Right lobe of liver (tissue), 6 donors: ENCODE measurements at regions of chr22 and their contacts with region 1.

Region 1: GRCh38 chr22:28019881-28020871 is 101.1 kb upstream of the PITPNB start:
- DNase-seq: peak; percentile 68 to 75 (median 71)
- ATAC-seq: peak; percentile 78 to 89 (median 85)
- H3K4me3 ChIP-seq: no peak overlapping the region
- H3K27ac ChIP-seq: no peak overlapping the region
- H3K4me1 ChIP-seq: no peaks in the 10 kb centered on the region
- H3K27me3 ChIP-seq: no peaks in the 10 kb centered on the region
- CTCF ChIP-seq: peak; percentile 89 to 94 (median 91)
- POLR2A ChIP-seq: no peak

Region 2: DNA sequence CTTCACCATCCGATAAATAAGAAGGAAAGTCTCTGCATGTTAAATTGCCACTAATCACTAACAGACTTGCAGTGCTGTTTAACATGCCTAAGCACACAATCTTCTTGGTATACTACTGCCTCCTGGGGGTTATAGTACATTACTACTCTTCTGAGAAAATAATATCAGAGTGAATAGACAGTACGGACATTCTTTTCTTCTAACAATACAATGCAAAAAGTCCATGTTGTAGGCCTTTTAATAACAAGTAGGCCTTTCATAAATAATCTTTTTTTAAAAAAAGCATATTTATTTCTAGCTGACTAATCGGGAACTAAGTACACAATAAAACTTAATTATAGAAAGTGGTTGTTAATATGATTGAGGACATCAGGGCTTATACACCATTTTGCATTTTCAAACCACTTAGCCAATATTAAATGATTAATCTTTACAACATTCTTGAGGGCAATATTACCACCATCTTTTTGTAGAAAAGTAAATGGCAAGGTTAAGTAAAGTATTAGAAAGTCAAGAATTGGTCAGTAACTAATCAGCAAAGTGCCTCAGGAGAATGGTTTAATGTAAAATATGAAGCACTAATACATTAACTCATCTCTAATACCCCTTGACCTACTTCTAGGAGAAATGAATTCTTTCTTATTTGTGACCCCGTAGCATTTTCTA is 574.8 kb after region 1 on chr22:
- intact Hi-C with region 1: loop called in 1 of 2 experiments (anchors 10 kb)
- DNase-seq: no peak
- ATAC-seq: peak; percentile 89 to 96 (median 92)
- H3K4me3 ChIP-seq: no peak overlapping the region
- H3K27ac ChIP-seq: no peak overlapping the region
- H3K4me1 ChIP-seq: no peaks in the 10 kb centered on the region
- H3K27me3 ChIP-seq: no peaks in the 10 kb centered on the region
- CTCF ChIP-seq: peak; percentile 72 to 85 (median 74)
- POLR2A ChIP-seq: no peak

Region 3: GRCh38 chr22:28656181-28656580 is 636.0 kb after region 1 on chr22:
- intact Hi-C with region 1: no loop called
- DNase-seq: no peak
- ATAC-seq: peak in 3 of 4 donors; percentile 46 to 57 (median 56)
- H3K4me3 ChIP-seq: no peak overlapping the region
- H3K27ac ChIP-seq: no peak overlapping the region
- H3K4me1 ChIP-seq: no peaks in the 10 kb centered on the region
- H3K27me3 ChIP-seq: no peaks in the 10 kb centered on the region
- CTCF ChIP-seq: no peak
- POLR2A ChIP-seq: no peak